Adrenal gland (tissue), 19 donors: ENCODE measurements at regions of chr1 and their contacts with region 1.

Region 1: GRCh38 chr1:204128964-204129896 is 22.6 kb downstream of the ETNK2 start:
- DNase-seq: peak; percentile 67 to 83 (median 73)
- H3K4me3 ChIP-seq: peak overlapping the region in 1 of 4 donors; percentile 33
- H3K27ac ChIP-seq: peak overlapping the region in 3 of 5 donors; percentile 36 to 76 (median 76)
- H3K4me1 ChIP-seq: peaks cover 32 to 48% of the 10 kb centered on the region in 2 donors
- H3K27me3 ChIP-seq: no peaks in the 10 kb centered on the region
- CTCF ChIP-seq: peak; percentile 74 to 92 (median 89)
- POLR2A ChIP-seq: no peak

Region 2: GRCh38 chr1:203871107-203871875 is 257.9 kb before region 1 on chr1:
- intact Hi-C with region 1: loop called (anchors 2 to 5 kb)
- DNase-seq: peak; percentile 32 to 77 (median 51)
- H3K4me3 ChIP-seq: no peak overlapping the region
- H3K27ac ChIP-seq: peak overlapping the region in 3 of 5 donors; percentile 6 to 54 (median 37)
- H3K4me1 ChIP-seq: peaks cover 0 to 14% of the 10 kb centered on the region in 2 donors
- H3K27me3 ChIP-seq: no peaks in the 10 kb centered on the region
- CTCF ChIP-seq: peak; percentile 72 to 99 (median 98)
- POLR2A ChIP-seq: no peak

Region 3: DNA sequence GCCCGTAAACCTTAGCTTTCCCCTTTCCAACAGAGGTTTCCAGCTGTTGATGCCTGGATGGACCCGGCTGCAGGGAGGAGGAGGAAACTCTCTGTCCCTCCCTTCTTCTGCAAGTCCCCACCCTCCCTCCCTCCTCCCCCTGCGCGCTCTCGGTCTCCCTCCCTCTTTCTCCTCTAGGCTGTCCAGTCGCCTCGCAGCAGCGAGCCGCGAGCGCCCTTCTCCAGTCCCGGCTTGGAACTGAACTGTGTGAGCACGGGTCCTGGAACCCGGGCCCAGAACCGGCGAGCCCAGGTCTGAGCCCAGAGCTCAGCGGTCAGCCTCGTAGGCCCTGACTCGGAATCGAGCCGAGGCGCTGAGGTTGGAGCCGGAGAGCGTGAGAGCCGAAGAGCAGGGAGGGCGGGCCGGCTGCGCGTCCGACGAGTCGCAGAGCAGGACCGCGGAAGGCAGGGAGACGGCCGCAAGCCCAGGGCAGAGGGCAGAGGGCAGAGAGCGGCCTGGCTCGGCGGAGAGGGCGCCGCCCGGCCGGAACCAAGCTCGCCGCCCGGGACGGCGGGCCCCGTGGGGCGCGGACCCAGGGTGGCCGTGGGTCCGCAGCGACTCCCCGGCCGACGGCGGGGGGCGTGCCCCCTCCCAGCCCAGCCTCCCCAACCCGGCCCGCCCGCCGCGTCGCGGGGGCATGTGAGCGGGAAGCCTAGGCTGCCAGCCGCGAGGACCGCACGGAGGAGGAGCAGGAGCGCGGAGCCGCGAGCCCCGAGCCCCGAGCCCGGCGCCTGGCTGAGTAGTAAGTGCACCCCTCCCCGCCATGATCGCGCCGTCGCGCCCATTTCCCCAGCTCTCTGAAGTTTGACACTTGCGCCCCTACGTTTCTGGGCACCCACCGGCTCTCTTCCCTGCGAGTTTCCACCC is 56.0 kb before region 1 on chr1 and contains the start of gene SOX13:
- intact Hi-C with region 1: loop called (anchors 5 kb)
- DNase-seq: peak; percentile 87 to 93 (median 90)
- H3K4me3 ChIP-seq: peak within 1 kb of the TSS; percentile 52 to 80 (median 75)
- H3K27ac ChIP-seq: peak within 1 kb of the TSS; percentile 7 to 87 (median 67)
- H3K4me1 ChIP-seq: peaks cover 9 to 33% of the 10 kb centered on the region in 2 donors
- H3K27me3 ChIP-seq: no peaks in the 10 kb centered on the region
- CTCF ChIP-seq: peak in 3 of 6 experiments; percentile 13 to 33 (median 20)
- POLR2A ChIP-seq: peak; percentile 77 to 93
- total RNA-seq, gene SOX13: 4.2 to 44.5 (median 28.2) TPM